ENCODE measurements at regions of chr7 and their contacts with region 1.

Region 1: DNA sequence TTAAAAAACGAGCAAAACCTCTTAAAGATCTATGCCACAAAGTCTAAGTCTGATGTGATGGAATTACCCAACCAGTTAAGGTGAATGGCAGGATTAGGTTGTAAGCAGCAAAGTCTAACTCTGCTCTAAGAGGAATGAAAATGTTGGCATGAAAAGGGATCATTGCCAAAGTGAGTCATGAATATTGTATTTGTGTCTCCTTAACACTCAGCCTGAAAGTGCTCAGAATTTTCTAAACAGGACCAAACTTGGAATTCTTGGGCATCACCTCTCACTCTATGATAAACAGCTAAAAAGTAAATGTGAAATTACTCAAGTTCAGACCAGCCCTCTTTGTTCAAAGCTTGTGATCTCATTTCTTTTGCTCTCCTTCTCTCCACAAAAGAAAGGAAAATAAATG is 27.0 kb downstream of the PPP1R3A start:
- DNase-seq: no peak
- ATAC-seq: no peak
- H3K4me3 ChIP-seq: no peak overlapping the region
- H3K27ac ChIP-seq: no peak overlapping the region
- H3K4me1 ChIP-seq: no peaks in the 10 kb centered on the region
- H3K27me3 ChIP-seq: no peaks in the 10 kb centered on the region
- CTCF ChIP-seq: no peak
- EP300 ChIP-seq: no peak
- POLR2A ChIP-seq: no peak
- RAD21 ChIP-seq: no peak

Region 2: DNA sequence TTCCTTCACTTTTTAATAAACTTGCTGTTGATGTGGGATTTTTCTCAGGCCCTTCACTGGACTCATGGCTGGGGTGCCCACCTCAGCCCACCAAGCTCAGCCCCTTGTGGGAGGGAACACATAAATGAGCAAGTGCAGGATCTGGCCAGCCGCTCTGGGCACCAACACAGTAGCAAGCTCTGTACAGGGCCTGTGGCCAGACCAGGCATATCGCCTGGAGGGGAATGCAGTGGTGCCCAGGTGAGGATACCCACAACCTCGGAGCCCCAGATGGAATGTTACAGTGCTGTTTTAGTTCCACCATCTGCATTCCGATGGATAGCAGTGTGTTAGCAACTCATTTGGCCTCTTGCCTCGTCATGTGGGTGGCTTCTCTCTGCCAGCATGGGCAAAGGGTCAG is 207.7 kb before region 1 on chr7:
- CTCF ChIA-PET with region 1: no interaction called
- POLR2A ChIA-PET with region 1: no interaction called
- RAD21 ChIA-PET with region 1: no interaction called
- SMC1A ChIA-PET with region 1: no interaction called
- in situ Hi-C with region 1: no loop called
- intact Hi-C with region 1: no loop called
- DNase-seq: no peak
- ATAC-seq: no peak
- H3K4me3 ChIP-seq: no peak overlapping the region
- H3K27ac ChIP-seq: no peak overlapping the region
- H3K4me1 ChIP-seq: no peaks in the 10 kb centered on the region
- H3K27me3 ChIP-seq: no peaks in the 10 kb centered on the region
- CTCF ChIP-seq: no peak
- EP300 ChIP-seq: no peak
- POLR2A ChIP-seq: no peak
- RAD21 ChIP-seq: no peak

Region 3: DNA sequence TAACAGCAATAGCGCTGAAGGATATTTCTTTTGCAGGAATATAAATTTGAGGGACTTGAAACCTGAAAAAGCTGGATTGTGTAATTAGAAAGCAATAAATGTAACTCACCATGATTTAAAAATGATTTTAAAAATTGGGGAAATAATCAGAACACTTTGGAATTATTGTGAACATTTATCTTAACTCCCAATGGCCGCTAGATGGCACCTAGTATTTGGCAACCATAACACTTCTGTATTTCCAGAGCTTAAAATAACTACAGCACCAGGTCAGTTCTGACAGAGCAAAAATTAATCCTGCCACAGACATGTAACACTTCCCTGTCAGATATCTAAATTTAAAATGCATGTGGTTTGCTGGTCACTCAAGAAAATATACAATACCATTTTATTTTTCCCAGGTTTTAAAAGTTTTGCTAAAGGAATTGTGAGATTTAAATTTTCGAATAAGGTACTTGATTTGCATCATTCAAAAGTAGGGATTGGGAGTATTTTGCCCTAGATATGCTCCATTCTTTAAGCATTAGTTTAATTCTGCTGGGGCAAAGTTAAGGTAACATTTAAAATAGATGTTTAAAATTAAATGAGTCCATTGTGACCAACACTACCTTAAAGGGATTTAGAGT is 117.5 kb before region 1 on chr7:
- CTCF ChIA-PET with region 1: no interaction called
- POLR2A ChIA-PET with region 1: no interaction called
- RAD21 ChIA-PET with region 1: no interaction called
- SMC1A ChIA-PET with region 1: no interaction called
- in situ Hi-C with region 1: no loop called
- intact Hi-C with region 1: loop called (anchors 5 kb)
- DNase-seq: no peak
- ATAC-seq: peak; percentile 84
- H3K4me3 ChIP-seq: no peak overlapping the region
- H3K27ac ChIP-seq: no peak overlapping the region
- H3K4me1 ChIP-seq: no peaks in the 10 kb centered on the region
- H3K27me3 ChIP-seq: no peaks in the 10 kb centered on the region
- CTCF ChIP-seq: peak; percentile 63 to 66 (median 63)
- EP300 ChIP-seq: no peak
- POLR2A ChIP-seq: no peak
- RAD21 ChIP-seq: peak; percentile 51

Measured in GM12878 (cell line).